ENCODE measurements at regions of chr3 and their contacts with region 1.

Region 1: GRCh38 chr3:146092230-146092629 is 68.8 kb downstream of the PLOD2 start:
- DNase-seq: no peak
- H3K4me3 Mint-ChIP-seq: no peak overlapping the region
- H3K27ac Mint-ChIP-seq: peak overlapping the region; percentile 45
- H3K4me1 Mint-ChIP-seq: peaks cover 46% of the 10 kb centered on the region
- H3K27me3 Mint-ChIP-seq: no peaks in the 10 kb centered on the region
- CTCF ChIP-seq: no peak

Region 2: GRCh38 chr3:145882436-145882835 is 209.8 kb before region 1 on chr3:
- CTCF ChIA-PET with region 1: interaction called, 11 read pairs
- intact Hi-C with region 1: no loop called
- DNase-seq: no peak
- H3K4me3 Mint-ChIP-seq: no peak overlapping the region
- H3K27ac Mint-ChIP-seq: no peak overlapping the region
- H3K4me1 Mint-ChIP-seq: no peaks in the 10 kb centered on the region
- H3K27me3 Mint-ChIP-seq: no peaks in the 10 kb centered on the region
- CTCF ChIP-seq: no peak

Region 3: GRCh38 chr3:146044046-146044445 is 48.2 kb before region 1 on chr3:
- CTCF ChIA-PET with region 1: no interaction called
- intact Hi-C with region 1: no loop called
- DNase-seq: no peak
- H3K4me3 Mint-ChIP-seq: no peak overlapping the region
- H3K27ac Mint-ChIP-seq: no peak overlapping the region
- H3K4me1 Mint-ChIP-seq: no peaks in the 10 kb centered on the region
- H3K27me3 Mint-ChIP-seq: no peaks in the 10 kb centered on the region
- CTCF ChIP-seq: no peak

Region 4: GRCh38 chr3:146077181-146077580 is 15.0 kb before region 1 on chr3:
- CTCF ChIA-PET with region 1: no interaction called
- intact Hi-C with region 1: loop called (anchors 1 kb)
- DNase-seq: no peak
- H3K4me3 Mint-ChIP-seq: peak overlapping the region; percentile 20
- H3K27ac Mint-ChIP-seq: peak overlapping the region; percentile 90
- H3K4me1 Mint-ChIP-seq: peaks cover 52% of the 10 kb centered on the region
- H3K27me3 Mint-ChIP-seq: no peaks in the 10 kb centered on the region
- CTCF ChIP-seq: no peak

Region 5: GRCh38 chr3:146125951-146126350 is 33.7 kb after region 1 on chr3:
- CTCF ChIA-PET with region 1: no interaction called
- intact Hi-C with region 1: no loop called
- DNase-seq: no peak
- H3K4me3 Mint-ChIP-seq: no peak overlapping the region
- H3K27ac Mint-ChIP-seq: peak overlapping the region; percentile 53
- H3K4me1 Mint-ChIP-seq: peaks cover 11% of the 10 kb centered on the region
- H3K27me3 Mint-ChIP-seq: no peaks in the 10 kb centered on the region
- CTCF ChIP-seq: no peak

Region 6: DNA sequence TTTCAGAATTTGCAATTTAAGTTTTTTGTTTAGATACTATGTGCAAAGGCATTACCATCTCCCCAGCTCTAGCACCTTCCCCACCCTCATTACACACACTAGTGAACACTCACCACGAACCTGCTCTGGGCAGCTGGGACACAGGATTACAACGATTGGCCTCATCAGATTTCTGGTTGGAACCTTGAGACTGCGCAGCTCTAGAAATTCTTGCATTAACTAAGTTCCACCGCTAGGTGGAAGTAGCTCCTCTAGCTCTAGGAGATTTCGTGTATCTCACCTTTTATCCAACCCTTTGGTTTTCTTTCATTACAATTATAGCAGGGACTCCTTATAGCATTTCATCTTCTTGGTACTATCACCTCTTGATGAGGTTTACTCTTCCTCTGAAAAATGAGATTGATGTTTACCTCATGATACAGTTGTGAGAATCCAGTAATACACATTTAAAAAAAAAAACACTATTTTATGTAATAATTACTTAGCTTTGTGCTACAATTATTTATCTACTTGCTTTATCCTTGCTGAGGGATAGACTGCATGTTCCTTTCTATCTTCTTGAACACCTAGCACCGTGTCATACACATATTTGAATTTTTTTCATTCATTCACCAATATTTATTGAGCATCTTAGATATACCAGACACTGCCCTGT is 97.4 kb after region 1 on chr3:
- CTCF ChIA-PET with region 1: interaction called, 10 read pairs
- intact Hi-C with region 1: no loop called
- DNase-seq: peak; percentile 57
- H3K4me3 Mint-ChIP-seq: peak overlapping the region; percentile 26
- H3K27ac Mint-ChIP-seq: peak overlapping the region; percentile 66
- H3K4me1 Mint-ChIP-seq: peaks cover 14% of the 10 kb centered on the region
- H3K27me3 Mint-ChIP-seq: no peaks in the 10 kb centered on the region
- CTCF ChIP-seq: peak; percentile 81